Transverse colon (tissue), 4 donors: ENCODE measurements at regions of chr18 and their contacts with region 1.

Region 1: GRCh38 chr18:34787931-34788532 is 77.9 kb downstream of the DTNA start:
- DNase-seq: peak; percentile 23
- H3K4me3 ChIP-seq: no peak overlapping the region
- H3K27ac ChIP-seq: no peak overlapping the region
- H3K4me1 ChIP-seq: peaks cover 0 to 4% (median 0%) of the 10 kb centered on the region in 4 donors
- H3K27me3 ChIP-seq: no peaks in the 10 kb centered on the region
- CTCF ChIP-seq: peak; percentile 75 to 79 (median 78)
- EP300 ChIP-seq: no peak
- POLR2A ChIP-seq: no peak

Region 2: DNA sequence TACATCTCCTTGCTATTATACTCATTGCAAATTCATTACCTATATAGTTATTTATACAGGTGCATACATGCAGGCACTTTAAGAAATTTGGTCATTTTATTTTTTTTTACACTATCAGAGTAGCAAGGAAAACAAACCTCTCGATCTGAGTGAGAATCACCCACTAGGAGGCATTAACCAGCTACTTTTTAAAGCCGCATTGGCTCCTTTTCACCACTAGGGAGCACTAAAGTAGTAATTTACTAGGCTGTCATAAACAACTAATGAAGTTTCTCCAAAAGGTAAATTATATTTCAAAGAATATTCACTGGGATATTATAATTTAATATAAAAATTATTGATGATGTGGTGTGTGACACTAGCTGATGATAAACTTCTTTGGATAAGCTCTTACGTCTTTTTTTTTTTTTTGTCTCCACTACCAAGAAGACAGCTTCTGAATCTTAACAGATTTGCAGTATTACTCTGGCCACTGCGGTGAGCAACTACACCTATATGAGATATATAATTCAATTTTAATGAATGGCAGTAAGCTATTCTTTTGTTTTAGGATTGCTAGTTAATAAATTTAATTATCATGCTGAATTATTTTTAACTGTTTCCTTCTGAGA is 665.2 kb before region 1 on chr18:
- in situ Hi-C with region 1: loop called in 1 of 4 experiments (anchors 25 kb)
- intact Hi-C with region 1: no loop called
- DNase-seq: peak; percentile 23
- H3K4me3 ChIP-seq: no peak overlapping the region
- H3K27ac ChIP-seq: no peak overlapping the region
- H3K4me1 ChIP-seq: peaks cover 0 to 3% (median 0%) of the 10 kb centered on the region in 4 donors
- H3K27me3 ChIP-seq: no peaks in the 10 kb centered on the region
- CTCF ChIP-seq: peak; percentile 79 to 89 (median 84)
- EP300 ChIP-seq: no peak
- POLR2A ChIP-seq: no peak

Region 3: DNA sequence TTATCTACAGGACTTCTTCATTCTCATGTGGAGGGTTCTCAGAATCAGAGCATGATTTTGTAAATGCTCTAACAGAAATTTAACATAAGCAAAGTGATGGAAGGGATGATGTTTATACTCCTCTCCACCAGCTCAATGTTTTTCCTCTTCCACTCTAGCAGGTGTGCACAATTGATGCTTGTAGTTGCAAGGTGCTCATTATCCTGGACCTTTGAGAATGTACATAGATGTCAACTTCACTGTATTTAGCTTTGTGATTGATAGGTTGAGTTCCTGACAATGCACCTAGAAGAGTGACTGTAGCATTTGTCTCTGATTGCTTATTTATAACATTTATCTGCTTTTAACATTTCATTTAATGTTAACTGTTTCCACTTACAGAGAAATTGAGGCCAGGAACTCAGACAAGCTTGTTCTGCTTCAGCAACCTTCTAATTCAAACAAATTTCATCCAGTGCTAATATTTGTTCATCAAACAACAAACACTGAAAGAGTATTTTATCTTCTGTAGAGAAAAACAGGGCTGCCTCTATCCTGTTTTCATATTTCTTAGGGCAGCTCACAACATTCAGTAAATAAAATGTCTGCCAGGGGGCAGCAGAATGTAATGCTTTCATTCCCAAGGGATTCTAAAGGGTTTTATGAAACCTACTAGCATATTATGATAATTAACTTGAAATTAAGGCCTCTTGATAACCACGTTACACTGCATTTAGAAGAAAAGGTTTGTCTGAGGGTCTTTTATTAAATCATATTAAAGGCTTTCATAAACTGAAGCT is 435.5 kb before region 1 on chr18:
- in situ Hi-C with region 1: loop called in 1 of 4 experiments (anchors 25 kb)
- intact Hi-C with region 1: no loop called
- DNase-seq: no peak
- H3K4me3 ChIP-seq: no peak overlapping the region
- H3K27ac ChIP-seq: no peak overlapping the region
- H3K4me1 ChIP-seq: no peaks in the 10 kb centered on the region
- H3K27me3 ChIP-seq: no peaks in the 10 kb centered on the region
- CTCF ChIP-seq: peak in 3 of 5 experiments; percentile 9 to 20 (median 16)
- EP300 ChIP-seq: no peak
- POLR2A ChIP-seq: no peak

Region 4: GRCh38 chr18:34592961-34593382 is 195.1 kb before region 1 on chr18:
- in situ Hi-C with region 1: no loop called
- intact Hi-C with region 1: loop called (anchors 10 kb)
- DNase-seq: peak; percentile 19
- H3K4me3 ChIP-seq: peak overlapping the region in 3 of 4 donors; percentile 6 to 31 (median 19)
- H3K27ac ChIP-seq: peak overlapping the region; percentile 65 to 80 (median 76)
- H3K4me1 ChIP-seq: peaks cover 0 to 10% (median 0%) of the 10 kb centered on the region in 4 donors
- H3K27me3 ChIP-seq: no peaks in the 10 kb centered on the region
- CTCF ChIP-seq: no peak
- EP300 ChIP-seq: no peak
- POLR2A ChIP-seq: no peak

Region 5: GRCh38 chr18:34661464-34662111 is 126.4 kb before region 1 on chr18:
- in situ Hi-C with region 1: loop called in 2 of 4 experiments (anchors 5 to 25 kb)
- intact Hi-C with region 1: no loop called
- DNase-seq: no peak
- H3K4me3 ChIP-seq: no peak overlapping the region
- H3K27ac ChIP-seq: peak overlapping the region in 3 of 4 donors; percentile 5 to 65 (median 60)
- H3K4me1 ChIP-seq: peaks cover 0 to 21% (median 9%) of the 10 kb centered on the region in 4 donors
- H3K27me3 ChIP-seq: no peaks in the 10 kb centered on the region
- CTCF ChIP-seq: peak; percentile 71 to 80 (median 79)
- EP300 ChIP-seq: no peak
- POLR2A ChIP-seq: no peak